Panc1 (cell line): ENCODE measurements at regions of chr17 and their contacts with region 1.

Region 1: DNA sequence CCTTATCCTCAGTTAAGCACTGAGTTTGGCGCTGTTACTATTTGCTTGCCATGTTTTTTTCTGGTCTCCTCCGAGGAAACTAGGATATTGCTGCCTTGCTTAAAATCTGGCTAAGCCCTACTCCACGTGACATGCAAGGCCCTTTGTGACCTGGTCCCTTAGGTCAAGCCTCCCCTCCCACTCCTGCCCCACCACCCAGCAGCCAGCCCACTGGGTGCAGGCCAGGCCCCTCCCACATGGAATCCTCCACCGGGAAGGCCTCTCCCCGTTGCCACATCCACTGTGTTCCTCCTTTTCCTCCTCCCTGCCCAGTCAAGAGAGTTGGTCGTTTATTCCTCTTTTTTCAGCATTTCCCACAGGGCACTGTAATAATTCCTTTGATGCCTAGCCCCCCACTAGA is 16.2 kb downstream of the PSMD3 start:
- DNase-seq: no peak
- ATAC-seq: no peak
- H3K4me3 ChIP-seq: no peak overlapping the region
- H3K27ac ChIP-seq: no peak overlapping the region
- H3K4me1 ChIP-seq: no peaks in the 10 kb centered on the region
- H3K27me3 ChIP-seq: no peaks in the 10 kb centered on the region
- CTCF ChIP-seq: no peak

Region 2: DNA sequence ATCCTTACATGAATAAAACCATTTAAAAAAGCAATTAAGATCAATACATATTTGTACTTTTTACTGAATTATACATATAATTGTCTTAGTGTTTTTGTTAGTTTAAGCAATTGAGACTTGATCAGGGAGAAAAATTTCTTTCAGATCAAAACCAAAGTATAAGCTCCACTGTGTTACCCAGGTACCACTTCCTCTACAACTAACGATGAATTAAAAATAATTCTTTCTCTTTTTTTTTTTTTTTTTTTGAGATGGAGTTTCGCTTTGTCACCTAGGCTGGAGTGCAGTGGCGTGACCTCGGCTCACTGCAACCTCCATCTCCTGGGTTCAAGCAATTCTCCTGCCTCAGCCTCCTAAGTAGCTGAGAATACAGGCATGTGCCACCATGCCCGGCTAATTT is 1036.4 kb before region 1 on chr17:
- CTCF ChIA-PET with region 1: interaction called, 13 read pairs
- POLR2A ChIA-PET with region 1: no interaction called
- in situ Hi-C with region 1: no loop called
- intact Hi-C with region 1: no loop called
- DNase-seq: no peak
- ATAC-seq: no peak
- H3K4me3 ChIP-seq: no peak overlapping the region
- H3K27ac ChIP-seq: no peak overlapping the region
- H3K4me1 ChIP-seq: no peaks in the 10 kb centered on the region; the same call in 1 of the 2 replicates
- H3K27me3 ChIP-seq: no peaks in the 10 kb centered on the region
- CTCF ChIP-seq: no peak